ENCODE measurements at regions of chr9 and their contacts with region 1.

Region 1: GRCh38 chr9:5425006-5425628 is 12.6 kb downstream of the PLGRKT start:
- DNase-seq: no peak
- H3K4me3 Mint-ChIP-seq: no peak overlapping the region
- H3K27ac Mint-ChIP-seq: no peak overlapping the region
- H3K4me1 Mint-ChIP-seq: peaks cover 13% of the 10 kb centered on the region
- H3K27me3 Mint-ChIP-seq: no peaks in the 10 kb centered on the region

Region 2: GRCh38 chr9:4258321-4258720 is 1166.8 kb before region 1 on chr9:
- CTCF ChIA-PET with region 1: no interaction called
- intact Hi-C with region 1: no loop called
- DNase-seq: no peak
- H3K4me3 Mint-ChIP-seq: no peak overlapping the region
- H3K27ac Mint-ChIP-seq: no peak overlapping the region
- H3K4me1 Mint-ChIP-seq: no peaks in the 10 kb centered on the region
- H3K27me3 Mint-ChIP-seq: peaks cover 2% of the 10 kb centered on the region

Region 3: DNA sequence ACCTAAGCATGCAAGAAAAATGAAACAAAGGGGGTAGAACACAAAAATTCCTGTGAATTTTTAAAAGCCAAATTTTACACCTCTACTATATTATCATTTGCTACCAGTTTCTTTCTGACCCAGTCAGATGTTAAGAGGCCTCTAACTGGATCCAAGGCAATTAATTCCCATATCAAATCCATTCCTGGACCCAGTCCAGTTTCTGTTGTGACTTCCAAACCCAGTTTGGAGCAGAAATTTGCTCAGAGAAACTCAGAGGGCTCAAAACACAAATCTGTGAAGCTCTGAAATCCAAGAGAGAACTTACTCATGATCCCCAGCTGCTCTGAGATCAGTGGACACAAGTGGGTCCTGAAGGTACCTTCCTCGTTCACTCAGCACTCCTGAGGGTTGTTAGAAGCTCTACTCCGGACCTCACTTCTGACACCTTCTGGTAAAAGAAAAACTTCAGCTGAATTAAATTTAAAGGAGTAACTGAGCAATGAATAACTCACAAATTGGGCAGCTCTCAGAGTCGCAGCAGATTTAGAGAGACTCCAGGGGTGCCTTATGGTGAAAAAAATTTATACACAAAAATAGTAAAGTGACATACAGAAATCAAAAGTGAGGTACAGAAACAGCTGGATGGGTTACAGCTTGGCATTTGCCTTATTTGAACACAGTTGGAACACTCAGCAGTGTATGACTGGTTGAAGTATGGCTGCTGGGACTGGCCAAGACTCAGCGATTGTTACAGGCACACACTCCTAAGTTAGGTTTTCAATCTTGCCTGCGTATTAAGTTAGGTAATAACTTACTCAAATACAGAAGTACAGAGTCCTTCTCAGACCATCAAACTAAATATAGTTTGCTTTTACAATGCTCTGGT is 161.5 kb before region 1 on chr9:
- CTCF ChIA-PET with region 1: no interaction called
- intact Hi-C with region 1: loop called (anchors 10 kb)
- DNase-seq: peak; percentile 11
- H3K4me3 Mint-ChIP-seq: no peak overlapping the region
- H3K27ac Mint-ChIP-seq: no peak overlapping the region
- H3K4me1 Mint-ChIP-seq: peaks cover 15% of the 10 kb centered on the region
- H3K27me3 Mint-ChIP-seq: no peaks in the 10 kb centered on the region

Region 4: DNA sequence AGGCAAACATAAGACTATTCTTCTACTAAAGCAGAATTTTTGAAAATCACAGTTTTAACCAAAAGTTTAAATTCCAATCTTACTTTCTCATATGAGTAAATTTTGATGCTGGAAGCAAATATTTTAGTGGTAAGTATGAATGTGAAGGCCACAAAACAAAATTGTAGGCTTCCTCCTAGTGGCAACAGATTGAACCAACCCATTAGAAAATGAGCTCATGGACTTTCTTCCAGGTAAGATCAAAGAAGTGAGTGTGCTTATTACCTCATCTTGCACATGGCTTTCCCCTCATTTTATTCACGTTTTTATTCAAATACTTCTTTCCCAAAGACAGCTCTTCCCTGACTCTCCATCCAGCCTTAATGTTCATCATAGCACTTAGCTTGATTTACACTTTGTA is 104.1 kb before region 1 on chr9:
- CTCF ChIA-PET with region 1: interaction called, 3 read pairs
- intact Hi-C with region 1: loop called (anchors 1 kb)
- DNase-seq: no peak
- H3K4me3 Mint-ChIP-seq: no peak overlapping the region
- H3K27ac Mint-ChIP-seq: no peak overlapping the region
- H3K4me1 Mint-ChIP-seq: peaks cover 7% of the 10 kb centered on the region
- H3K27me3 Mint-ChIP-seq: no peaks in the 10 kb centered on the region

Region 5: GRCh38 chr9:5593904-5594303 is 168.8 kb after region 1 on chr9:
- CTCF ChIA-PET with region 1: interaction called, 13 read pairs
- intact Hi-C with region 1: loop called (anchors 1 kb)
- DNase-seq: no peak
- H3K4me3 Mint-ChIP-seq: no peak overlapping the region
- H3K27ac Mint-ChIP-seq: no peak overlapping the region
- H3K4me1 Mint-ChIP-seq: peaks cover 24% of the 10 kb centered on the region
- H3K27me3 Mint-ChIP-seq: no peaks in the 10 kb centered on the region

Measured in activated naive CD4-positive, alpha-beta T cell treated with anti-CD3 and anti-CD28 coated beads for 36 hours (primary cell).